WTC11 (cell line): ENCODE measurements at regions of chr2 and their contacts with region 1.

Region 1: DNA sequence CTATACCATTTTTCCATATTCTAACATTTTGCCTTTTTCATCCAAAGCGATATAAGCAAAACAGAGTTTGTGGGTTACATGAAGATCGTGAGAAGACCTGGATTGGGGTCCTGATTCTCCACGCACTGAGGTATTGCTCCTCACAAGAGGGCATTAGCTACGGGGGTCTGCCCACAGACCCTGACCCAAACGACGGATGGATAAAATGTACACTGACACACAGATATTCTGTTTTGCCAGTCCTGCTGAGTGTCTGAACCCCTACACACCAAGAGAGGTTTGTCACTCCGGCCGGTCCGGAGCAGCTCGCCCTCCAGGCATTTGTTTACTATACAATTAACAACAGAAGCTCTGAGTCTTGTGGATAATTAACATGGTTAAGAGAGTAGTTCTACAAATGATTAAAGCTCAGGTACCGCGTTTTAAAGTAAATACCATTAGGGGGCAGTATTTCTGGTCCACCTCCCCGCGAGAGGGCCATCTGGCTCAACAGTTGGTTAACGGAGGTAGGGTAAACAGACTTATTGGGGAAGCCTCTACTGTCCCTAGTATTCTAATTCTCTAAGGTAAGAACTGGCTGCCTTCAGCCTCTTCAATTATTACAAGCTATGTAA is 28.4 kb downstream of the SCYGR8 start:
- DNase-seq: peak; percentile 28
- ATAC-seq: peak; percentile 76
- H3K4me3 Mint-ChIP-seq: no peak overlapping the region
- H3K27ac Mint-ChIP-seq: peak overlapping the region; percentile 75; the same call in 1 of the 2 replicates
- H3K4me1 Mint-ChIP-seq: peaks cover 25% of the 10 kb centered on the region
- H3K27me3 Mint-ChIP-seq: no peaks in the 10 kb centered on the region
- CTCF ChIP-seq: no peak; the same call in 1 of the 2 replicates

Region 2: DNA sequence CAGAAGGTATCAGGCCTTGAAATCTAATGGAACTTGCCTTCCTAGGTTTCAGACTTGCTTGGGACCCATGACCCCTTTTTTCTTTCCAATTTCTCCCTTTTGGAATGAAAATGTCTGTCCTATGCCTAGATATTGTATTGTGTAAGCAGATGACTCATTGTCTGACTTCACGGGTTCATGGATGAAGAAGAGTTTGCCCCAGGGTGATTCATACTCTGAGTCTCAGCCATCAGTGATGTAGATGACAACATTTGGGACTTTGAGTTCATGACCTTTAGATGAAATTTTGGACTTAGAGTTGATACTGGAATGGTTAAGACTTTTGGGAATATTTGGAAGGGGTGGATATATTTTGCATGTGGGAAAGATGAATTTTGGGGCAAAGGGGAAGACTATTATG is 118.7 kb before region 1 on chr2:
- CTCF ChIA-PET with region 1: interaction called, 10 read pairs
- POLR2A ChIA-PET with region 1: no interaction called
- DNase-seq: no peak
- ATAC-seq: no peak
- H3K4me3 Mint-ChIP-seq: no peak overlapping the region
- H3K27ac Mint-ChIP-seq: no peak overlapping the region
- H3K4me1 Mint-ChIP-seq: no peaks in the 10 kb centered on the region
- H3K27me3 Mint-ChIP-seq: no peaks in the 10 kb centered on the region
- CTCF ChIP-seq: no peak

Region 3: GRCh38 chr2:227739351-227739750 is 34.8 kb before region 1 on chr2:
- CTCF ChIA-PET with region 1: interaction called, 10 read pairs
- POLR2A ChIA-PET with region 1: no interaction called
- DNase-seq: no peak
- ATAC-seq: no peak
- H3K4me3 Mint-ChIP-seq: no peak overlapping the region
- H3K27ac Mint-ChIP-seq: no peak overlapping the region
- H3K4me1 Mint-ChIP-seq: peaks cover 11% of the 10 kb centered on the region
- H3K27me3 Mint-ChIP-seq: no peaks in the 10 kb centered on the region; the same call in 1 of the 2 replicates
- CTCF ChIP-seq: no peak

Region 4: GRCh38 chr2:227862227-227862740 is 88.2 kb after region 1 on chr2:
- CTCF ChIA-PET with region 1: interaction called, 20 read pairs
- POLR2A ChIA-PET with region 1: no interaction called
- DNase-seq: no peak
- ATAC-seq: no peak
- H3K4me3 Mint-ChIP-seq: no peak overlapping the region
- H3K27ac Mint-ChIP-seq: no peak overlapping the region
- H3K4me1 Mint-ChIP-seq: peaks cover 26% of the 10 kb centered on the region
- H3K27me3 Mint-ChIP-seq: no peaks in the 10 kb centered on the region
- CTCF ChIP-seq: peak; percentile 72